Activated naive CD8-positive, alpha-beta T cell treated with anti-CD3 and anti-CD28 coated beads, Interleukin-2, amount 10 ng/mL, durations not matched to agents 7 days and 5 days (primary cell): ENCODE measurements at regions of chr16 and their contacts with region 1.

Region 1: DNA sequence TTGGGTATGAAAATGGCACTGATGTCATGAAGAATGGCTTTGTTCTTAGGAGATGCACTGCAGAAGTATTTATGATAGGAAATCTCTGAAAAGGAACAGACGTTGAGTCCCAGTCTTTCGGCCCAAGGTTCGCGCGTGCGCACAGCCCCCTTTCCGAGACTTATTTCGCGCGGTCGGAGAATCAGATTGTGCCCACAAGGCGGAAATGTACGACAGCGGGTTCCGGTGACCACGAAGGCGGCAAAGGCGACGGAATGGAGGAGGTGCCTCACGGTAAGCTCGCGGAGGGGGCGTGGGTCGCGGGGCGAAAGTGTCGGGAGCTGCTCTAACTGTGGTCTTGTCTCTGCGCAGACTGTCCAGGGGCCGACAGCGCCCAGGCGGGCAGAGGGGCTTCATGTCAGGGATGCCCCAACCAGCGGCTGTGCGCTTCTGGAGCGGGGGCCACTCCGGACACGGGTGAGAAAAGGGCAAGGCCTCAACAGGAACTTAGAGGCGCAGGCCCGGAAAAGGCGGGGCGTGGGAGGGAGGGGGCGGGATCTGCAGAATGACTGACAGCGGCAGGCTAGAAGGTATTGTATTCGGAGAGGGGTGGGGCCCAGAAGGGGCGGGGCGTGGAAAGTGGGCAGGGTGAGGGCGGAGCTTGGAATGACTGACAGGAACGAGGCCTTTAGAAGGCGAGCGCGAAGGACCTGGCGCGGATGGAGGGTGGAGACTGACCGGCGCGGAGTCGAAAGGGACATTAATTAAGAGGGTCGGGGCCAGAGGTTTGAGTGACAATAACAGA is at the start of gene NUBP1:
- DNase-seq: peak; percentile 98
- ATAC-seq: peak; percentile 91
- H3K4me3 Mint-ChIP-seq: peak within 1 kb of the TSS; percentile 98
- H3K27ac Mint-ChIP-seq: peak within 1 kb of the TSS; percentile 93
- H3K4me1 Mint-ChIP-seq: peaks cover 44% of the 10 kb centered on the region
- H3K27me3 Mint-ChIP-seq: no peaks in the 10 kb centered on the region
- total RNA-seq, gene NUBP1: 24.5 to 24.6 TPM

Region 2: GRCh38 chr16:10708969-10709368 is 34.8 kb before region 1 on chr16:
- POLR2A ChIA-PET with region 1: no interaction called
- DNase-seq: no peak
- ATAC-seq: no peak
- H3K4me3 Mint-ChIP-seq: no peak overlapping the region
- H3K27ac Mint-ChIP-seq: no peak overlapping the region
- H3K4me1 Mint-ChIP-seq: no peaks in the 10 kb centered on the region
- H3K27me3 Mint-ChIP-seq: no peaks in the 10 kb centered on the region

Region 3: DNA sequence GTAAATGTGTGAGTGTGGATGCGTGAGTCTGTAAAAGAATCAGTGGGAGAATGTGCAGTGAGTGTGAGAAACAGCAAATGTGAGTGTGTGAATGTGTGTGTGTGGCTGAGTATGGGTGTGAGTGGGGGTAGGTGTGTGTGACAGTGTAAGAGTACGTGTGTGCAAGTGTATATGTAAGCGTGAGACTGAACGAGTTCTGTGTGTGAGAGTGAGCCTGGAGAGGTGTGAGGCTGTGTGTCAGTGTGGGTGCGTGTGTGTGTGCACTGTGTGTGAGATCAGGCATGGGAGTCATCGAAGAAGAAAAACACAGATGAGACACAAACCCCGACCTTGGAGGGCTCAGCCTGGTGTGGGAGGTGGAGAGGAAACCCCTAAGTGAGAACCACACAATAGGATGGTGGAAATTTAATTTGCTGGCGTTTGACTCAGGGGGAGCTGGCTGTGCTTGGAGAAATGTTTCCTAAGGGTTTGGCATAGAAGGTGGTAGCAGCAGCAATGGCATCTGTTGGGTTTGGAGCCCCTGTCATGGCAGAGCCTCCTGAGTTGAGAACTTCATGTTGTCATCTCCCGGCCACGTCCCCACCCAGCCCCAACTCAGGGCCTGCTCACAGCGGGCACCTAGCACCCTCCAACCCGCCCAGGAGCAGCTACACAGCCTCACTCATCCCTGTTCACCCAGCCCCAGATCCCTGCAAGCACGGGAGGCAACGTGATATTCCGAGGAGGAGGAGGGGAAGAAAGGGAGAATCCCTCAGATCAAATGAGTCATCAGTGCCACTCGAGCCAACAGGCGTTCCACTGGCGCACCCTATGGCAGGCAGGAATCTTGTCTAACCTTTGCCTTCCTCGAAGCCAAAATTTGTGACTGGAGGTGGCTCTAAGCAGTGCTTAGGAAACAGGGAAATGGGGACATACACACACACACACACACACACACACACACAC is 14.4 kb before region 1 on chr16:
- POLR2A ChIA-PET with region 1: no interaction called
- DNase-seq: no peak
- ATAC-seq: no peak
- H3K4me3 Mint-ChIP-seq: no peak overlapping the region
- H3K27ac Mint-ChIP-seq: no peak overlapping the region
- H3K4me1 Mint-ChIP-seq: no peaks in the 10 kb centered on the region
- H3K27me3 Mint-ChIP-seq: no peaks in the 10 kb centered on the region

Region 4: GRCh38 chr16:10835281-10835931 is 91.6 kb after region 1 on chr16:
- POLR2A ChIA-PET with region 1: no interaction called
- DNase-seq: no peak
- ATAC-seq: no peak
- H3K4me3 Mint-ChIP-seq: no peak overlapping the region
- H3K27ac Mint-ChIP-seq: no peak overlapping the region
- H3K4me1 Mint-ChIP-seq: peaks cover 1% of the 10 kb centered on the region
- H3K27me3 Mint-ChIP-seq: peaks cover 13% of the 10 kb centered on the region

Region 5: DNA sequence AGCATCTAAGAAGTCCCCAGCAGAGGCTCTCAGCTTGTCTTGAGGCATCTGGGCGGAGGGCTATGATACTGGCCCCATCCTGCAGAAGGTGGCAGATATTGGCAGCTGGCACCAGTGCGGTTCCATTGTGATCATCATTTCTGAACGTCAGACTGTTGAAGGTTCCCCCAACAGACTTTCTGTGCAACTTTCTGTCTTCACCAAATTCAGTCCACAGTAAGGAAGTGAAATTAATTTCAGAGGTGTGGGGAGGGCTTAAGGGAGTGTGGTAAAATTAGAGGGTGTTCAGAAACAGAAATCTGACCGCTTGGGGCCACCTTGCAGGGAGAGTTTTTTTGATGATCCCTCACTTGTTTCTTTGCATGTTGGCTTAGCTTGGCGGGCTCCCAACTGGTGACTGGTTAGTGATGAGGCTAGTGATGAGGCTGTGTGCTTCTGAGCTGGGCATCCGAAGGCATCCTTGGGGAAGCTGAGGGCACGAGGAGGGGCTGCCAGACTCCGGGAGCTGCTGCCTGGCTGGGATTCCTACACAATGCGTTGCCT is 133.1 kb after region 1 on chr16 and contains the start of gene CIITA:
- POLR2A ChIA-PET with region 1: interaction called, 17 read pairs
- DNase-seq: peak; percentile 61
- ATAC-seq: peak; percentile 64
- H3K4me3 Mint-ChIP-seq: peak within 1 kb of the TSS; percentile 97
- H3K27ac Mint-ChIP-seq: peak within 1 kb of the TSS; percentile 53
- H3K4me1 Mint-ChIP-seq: peaks cover 67% of the 10 kb centered on the region
- H3K27me3 Mint-ChIP-seq: peaks cover 47% of the 10 kb centered on the region
- total RNA-seq, gene CIITA: 12.6 to 13.1 TPM

Region 6: DNA sequence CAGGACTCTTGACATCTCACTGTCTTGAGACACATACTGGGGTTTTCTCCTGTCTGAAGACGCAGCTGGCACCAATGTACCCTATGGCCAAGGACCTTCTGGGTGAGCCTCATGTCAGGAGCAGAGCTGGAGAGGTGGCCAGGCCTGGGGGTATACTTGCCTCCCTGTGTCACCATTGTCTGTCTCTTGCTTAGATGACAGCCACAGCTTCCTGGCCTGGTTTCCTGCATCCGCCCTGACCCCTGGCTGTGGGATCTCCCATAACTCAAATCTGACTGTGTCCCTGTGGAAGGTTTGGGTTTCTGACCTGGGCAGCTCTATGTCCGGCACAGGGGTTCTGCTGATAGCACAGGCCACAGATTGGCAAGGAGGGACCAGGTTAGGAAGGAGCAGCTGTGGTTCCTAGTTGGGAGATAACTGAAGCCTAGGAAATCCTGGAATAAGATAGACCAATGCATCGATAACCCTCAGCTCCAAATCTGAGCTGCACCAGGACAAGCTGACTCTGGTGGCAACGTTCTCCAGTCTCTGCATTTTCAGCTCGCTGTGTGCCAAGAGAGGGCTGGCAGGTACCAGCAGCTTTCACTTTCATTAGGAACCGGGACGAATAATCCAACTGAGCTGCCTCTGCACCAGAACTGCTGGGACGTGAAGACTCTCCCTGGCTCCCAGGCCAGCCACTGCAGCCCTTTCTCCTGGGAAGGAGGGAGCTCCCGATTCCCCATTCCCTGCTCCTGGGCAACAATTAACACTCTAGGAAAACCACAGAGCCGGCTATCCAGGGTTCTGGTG is 193.5 kb after region 1 on chr16:
- POLR2A ChIA-PET with region 1: interaction called, 13 read pairs
- DNase-seq: no peak
- ATAC-seq: no peak
- H3K4me3 Mint-ChIP-seq: peak overlapping the region; percentile 92
- H3K27ac Mint-ChIP-seq: peak overlapping the region; percentile 54
- H3K4me1 Mint-ChIP-seq: peaks cover 69% of the 10 kb centered on the region
- H3K27me3 Mint-ChIP-seq: no peaks in the 10 kb centered on the region